ENCODE measurements at regions of chr1 and their contacts with region 1.

Region 1: GRCh38 chr1:160006312-160006940 is 25.4 kb downstream of the PIGM start:
- DNase-seq: peak; percentile 55
- H3K4me3 ChIP-seq: no peak overlapping the region
- H3K27ac ChIP-seq: no peak overlapping the region
- H3K4me1 ChIP-seq: no peaks in the 10 kb centered on the region
- H3K27me3 ChIP-seq: peaks cover 16 to 19% of the 10 kb centered on the region in 2 experiments
- CTCF ChIP-seq: peak; percentile 86 to 91
- POLR2A ChIP-seq: no peak

Region 2: DNA sequence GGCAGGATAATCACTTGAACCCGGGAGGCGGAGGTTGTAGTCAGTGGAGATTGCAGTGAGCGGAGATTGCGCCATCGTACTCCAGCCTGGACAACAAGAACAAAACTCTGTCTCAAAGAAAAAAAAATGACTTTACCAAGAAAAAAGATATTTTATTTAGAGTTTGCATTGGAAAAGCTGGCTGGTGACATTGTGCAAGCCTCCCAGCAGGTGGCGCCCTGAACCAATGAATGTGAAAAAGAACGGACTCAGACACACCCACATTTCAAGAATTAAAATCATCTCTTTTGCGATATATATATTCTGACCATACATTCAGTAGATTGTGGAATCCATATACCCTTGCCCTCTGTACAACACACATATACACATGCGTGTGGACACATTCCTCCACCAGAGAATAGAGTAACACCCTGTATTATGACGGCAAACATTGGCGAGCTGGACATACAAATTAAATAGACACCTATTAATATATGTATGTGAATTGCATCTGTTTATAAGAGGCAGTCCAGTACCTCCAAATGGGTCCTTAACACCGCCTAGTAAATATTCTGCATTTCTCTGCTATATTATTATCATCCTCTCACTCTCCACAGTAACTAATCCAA is 874.0 kb before region 1 on chr1:
- CTCF ChIA-PET with region 1: interaction called, 101 read pairs
- POLR2A ChIA-PET with region 1: no interaction called
- dilution Hi-C with region 1: no loop called
- intact Hi-C with region 1: loop called (anchors 1 kb)
- DNase-seq: peak; percentile 68
- H3K4me3 ChIP-seq: no peak overlapping the region
- H3K27ac ChIP-seq: no peak overlapping the region
- H3K4me1 ChIP-seq: no peaks in the 10 kb centered on the region
- H3K27me3 ChIP-seq: peaks cover 15 to 16% of the 10 kb centered on the region in 2 experiments
- CTCF ChIP-seq: peak; percentile 76 to 89
- POLR2A ChIP-seq: no peak

Region 3: GRCh38 chr1:159712080-159712479 is 294.3 kb before region 1 on chr1:
- CTCF ChIA-PET with region 1: no interaction called
- POLR2A ChIA-PET with region 1: no interaction called
- dilution Hi-C with region 1: no loop called
- intact Hi-C with region 1: no loop called
- DNase-seq: no peak
- H3K4me3 ChIP-seq: no peak overlapping the region
- H3K27ac ChIP-seq: no peak overlapping the region
- H3K4me1 ChIP-seq: no peaks in the 10 kb centered on the region
- H3K27me3 ChIP-seq: no peaks in the 10 kb centered on the region
- CTCF ChIP-seq: no peak
- POLR2A ChIP-seq: no peak

Region 4: DNA sequence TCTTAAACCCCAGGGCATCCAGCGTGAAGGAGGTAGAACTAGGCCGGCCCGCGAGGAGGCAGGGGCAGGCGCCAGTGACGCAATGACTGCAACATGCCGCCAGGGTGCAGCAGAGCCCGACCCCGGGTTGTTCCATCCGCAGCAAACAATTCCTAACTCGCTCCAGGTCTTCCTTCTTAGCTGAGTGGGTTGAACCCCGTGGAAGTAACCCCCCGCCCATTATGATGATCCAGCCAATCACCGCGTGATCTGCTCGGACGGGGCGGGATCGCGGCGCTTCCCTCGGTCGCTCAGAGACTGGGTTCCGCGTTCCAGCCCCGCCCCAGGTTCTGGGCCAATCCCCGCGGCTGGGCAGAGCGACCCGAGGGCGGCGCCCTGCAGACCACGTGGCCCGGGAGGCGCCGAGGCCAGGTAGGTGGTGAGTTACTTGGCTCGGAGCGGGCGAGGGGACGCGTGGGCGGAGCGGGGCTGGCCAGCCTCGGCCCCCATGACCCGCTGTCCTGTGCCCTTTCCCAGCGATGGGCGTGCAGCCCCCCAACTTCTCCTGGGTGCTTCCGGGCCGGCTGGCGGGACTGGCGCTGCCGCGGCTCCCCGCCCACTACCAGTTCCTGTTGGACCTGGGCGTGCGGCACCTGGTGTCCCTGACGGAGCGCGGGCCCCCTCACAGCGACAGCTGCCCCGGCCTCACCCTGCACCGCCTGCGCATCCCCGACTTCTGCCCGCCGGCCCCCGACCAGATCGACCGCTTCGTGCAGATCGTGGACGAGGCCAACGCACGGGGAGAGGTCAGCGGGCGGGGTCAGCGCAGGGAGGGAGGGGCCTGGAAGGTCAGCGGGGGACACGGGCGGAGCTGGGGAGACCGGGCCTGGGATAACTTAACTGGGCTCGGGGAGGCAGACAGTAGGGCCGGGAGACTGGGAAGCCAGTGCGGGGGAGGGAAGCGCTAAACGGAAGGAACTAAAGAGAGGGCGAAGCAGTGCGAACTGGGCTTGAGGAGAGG is 225.5 kb before region 1 on chr1 and contains the start of gene DUSP23:
- CTCF ChIA-PET with region 1: interaction called, 6 read pairs
- POLR2A ChIA-PET with region 1: no interaction called
- dilution Hi-C with region 1: no loop called
- intact Hi-C with region 1: loop called (anchors 2 kb)
- DNase-seq: peak; percentile 100
- H3K4me3 ChIP-seq: peak within 1 kb of the TSS; percentile 35 to 80 (median 62)
- H3K27ac ChIP-seq: peak within 1 kb of the TSS; percentile 92
- H3K4me1 ChIP-seq: peaks cover 46% of the 10 kb centered on the region
- H3K27me3 ChIP-seq: no peaks in the 10 kb centered on the region
- CTCF ChIP-seq: peak; percentile 90 to 97
- POLR2A ChIP-seq: peak; percentile 10
- total RNA-seq, gene DUSP23: 82.5 and 126 TPM in 2 replicates

Region 5: DNA sequence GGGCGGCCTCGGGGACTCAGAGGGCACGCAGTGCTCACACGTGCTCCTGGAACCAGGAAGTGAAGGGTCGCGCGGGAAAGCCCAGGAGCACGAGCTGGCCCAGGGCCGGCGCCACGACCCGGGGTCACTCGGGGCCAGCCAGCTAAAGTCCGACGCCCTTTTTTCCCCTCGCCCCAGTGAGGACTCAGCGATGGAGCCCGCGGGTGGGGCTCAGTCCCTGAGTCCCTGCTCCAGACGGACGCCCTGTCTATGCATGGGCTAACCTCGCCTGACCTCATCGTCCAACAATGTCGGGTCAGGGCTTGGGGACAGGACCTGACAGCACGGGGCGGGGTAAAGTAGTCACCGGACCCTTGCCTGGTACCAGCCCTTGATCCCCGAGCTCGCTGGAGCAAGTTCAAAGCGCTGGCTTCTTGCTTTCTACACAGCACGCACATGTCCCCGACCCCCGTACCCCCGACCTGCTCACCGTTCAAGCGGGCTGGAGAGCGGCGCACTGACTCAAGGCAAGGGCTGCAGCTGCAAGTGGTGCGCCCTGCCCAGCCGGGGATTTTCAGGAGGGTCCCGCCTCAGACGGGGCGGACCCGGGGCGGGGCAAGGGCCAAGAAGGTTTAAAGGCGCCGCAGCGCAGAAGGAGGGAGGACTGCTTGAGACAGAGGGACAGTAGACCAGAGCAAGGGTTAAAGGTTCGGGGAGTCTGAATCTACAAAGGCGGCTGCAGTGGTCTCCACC is 81.3 kb before region 1 on chr1 and contains the start of gene TAGLN2:
- CTCF ChIA-PET with region 1: interaction called, 13 read pairs
- POLR2A ChIA-PET with region 1: no interaction called
- dilution Hi-C with region 1: no loop called
- intact Hi-C with region 1: no loop called
- DNase-seq: peak; percentile 93
- H3K4me3 ChIP-seq: peak within 1 kb of the TSS; percentile 46 to 78 (median 71)
- H3K27ac ChIP-seq: peak within 1 kb of the TSS; percentile 98
- H3K4me1 ChIP-seq: peaks cover 27% of the 10 kb centered on the region
- H3K27me3 ChIP-seq: no peaks in the 10 kb centered on the region
- CTCF ChIP-seq: no peak
- POLR2A ChIP-seq: peak; percentile 98
- total RNA-seq, gene TAGLN2: 646 and 750 TPM in 2 replicates

Region 6: DNA sequence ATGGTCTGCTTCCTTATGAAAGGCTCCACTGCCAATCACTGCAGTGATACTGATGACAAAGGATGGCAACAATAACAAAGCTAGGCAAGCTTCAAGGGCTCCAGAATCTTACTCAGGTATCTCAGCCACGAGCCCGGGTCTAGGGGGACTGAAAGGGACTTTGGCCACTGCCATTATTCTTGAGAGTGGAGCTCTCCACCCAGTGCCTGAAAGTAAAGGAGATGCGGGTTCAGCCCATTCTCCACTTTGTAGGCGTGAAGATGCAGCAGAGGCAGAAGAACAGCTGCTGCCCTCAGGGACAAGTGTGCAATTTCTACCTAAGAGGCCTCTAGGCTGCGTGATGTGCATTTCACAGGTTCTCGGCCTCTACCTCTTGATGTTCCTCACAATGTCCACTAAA is 21.0 kb before region 1 on chr1:
- CTCF ChIA-PET with region 1: interaction called, 79 read pairs
- POLR2A ChIA-PET with region 1: no interaction called
- dilution Hi-C with region 1: no loop called
- intact Hi-C with region 1: no loop called
- DNase-seq: no peak
- H3K4me3 ChIP-seq: no peak overlapping the region
- H3K27ac ChIP-seq: no peak overlapping the region
- H3K4me1 ChIP-seq: no peaks in the 10 kb centered on the region
- H3K27me3 ChIP-seq: peaks cover 5 to 8% of the 10 kb centered on the region in 2 experiments
- CTCF ChIP-seq: no peak
- POLR2A ChIP-seq: no peak

Region 7: DNA sequence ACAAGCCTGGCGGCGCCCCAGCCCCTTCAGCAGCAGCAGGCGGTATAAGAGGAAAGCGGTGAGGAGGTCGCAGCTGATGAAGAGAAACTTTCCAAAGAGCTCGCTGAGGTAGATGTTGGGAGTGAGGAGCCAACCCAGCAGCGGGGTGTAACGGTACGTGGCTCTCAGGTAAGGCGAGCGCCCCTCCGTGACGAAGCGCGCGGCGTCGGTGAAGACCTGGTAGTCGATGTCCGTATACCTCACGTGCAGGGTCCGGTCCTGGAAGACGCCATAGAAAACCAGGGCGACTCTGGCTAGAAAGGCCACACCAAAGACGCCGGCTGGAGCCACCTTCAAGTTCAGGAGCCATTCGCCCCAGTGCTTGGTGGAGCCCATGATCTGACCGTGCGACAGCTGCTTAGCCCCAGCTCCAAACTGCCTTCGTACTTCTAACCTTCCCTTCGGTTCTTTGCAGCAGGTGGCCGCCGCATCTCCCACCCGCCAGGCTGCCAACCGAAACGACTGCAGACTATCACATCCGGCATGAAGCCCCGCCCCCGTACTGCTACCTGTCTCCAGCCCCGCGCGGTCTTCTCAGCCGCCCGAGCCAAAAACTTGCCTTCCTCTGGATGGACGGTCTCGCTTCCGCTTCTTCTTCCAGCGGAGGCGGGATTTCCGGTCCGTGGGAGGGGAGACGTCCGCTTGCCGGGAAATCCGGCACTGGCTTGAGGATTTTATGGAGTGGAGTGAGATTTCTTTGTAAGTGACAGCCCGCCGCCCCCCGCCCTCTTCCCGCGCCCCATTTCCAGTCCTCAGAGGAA is 25.1 kb after region 1 on chr1 and contains the start of gene PIGM:
- CTCF ChIA-PET with region 1: interaction called, 34 read pairs
- POLR2A ChIA-PET with region 1: no interaction called
- dilution Hi-C with region 1: no loop called
- intact Hi-C with region 1: no loop called
- DNase-seq: peak; percentile 81
- H3K4me3 ChIP-seq: peak within 1 kb of the TSS; percentile 43 to 99 (median 78)
- H3K27ac ChIP-seq: no peak within 1 kb of the TSS
- H3K4me1 ChIP-seq: peaks cover 11% of the 10 kb centered on the region
- H3K27me3 ChIP-seq: peaks cover 4 to 11% of the 10 kb centered on the region in 2 experiments
- CTCF ChIP-seq: no peak
- POLR2A ChIP-seq: no peak
- total RNA-seq, gene PIGM: 4.8 and 5.4 TPM in 2 replicates